Left colon (tissue), 2 donors: ENCODE measurements at regions of chr16 and their contacts with region 1.

Region 1: DNA sequence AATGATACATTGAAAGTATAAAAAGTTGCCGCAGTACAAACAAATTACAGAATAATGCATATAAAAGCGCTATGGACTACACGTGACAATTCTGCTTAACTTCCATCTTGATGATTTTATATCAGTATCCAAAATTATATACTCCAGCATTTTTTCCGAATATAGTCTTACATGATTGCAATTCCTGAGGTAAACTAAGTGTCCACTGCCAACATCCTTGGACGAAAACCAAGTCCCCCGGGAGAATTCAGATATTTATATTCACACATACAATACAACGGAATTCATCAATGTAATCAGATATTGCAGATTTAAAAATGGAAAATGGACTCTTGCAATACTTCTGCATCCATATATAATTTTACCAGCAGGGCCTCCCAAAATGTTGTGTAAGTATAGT is 8.9 kb upstream of the MYH11 start:
- DNase-seq: no peak
- ATAC-seq: no peak

Region 2: DNA sequence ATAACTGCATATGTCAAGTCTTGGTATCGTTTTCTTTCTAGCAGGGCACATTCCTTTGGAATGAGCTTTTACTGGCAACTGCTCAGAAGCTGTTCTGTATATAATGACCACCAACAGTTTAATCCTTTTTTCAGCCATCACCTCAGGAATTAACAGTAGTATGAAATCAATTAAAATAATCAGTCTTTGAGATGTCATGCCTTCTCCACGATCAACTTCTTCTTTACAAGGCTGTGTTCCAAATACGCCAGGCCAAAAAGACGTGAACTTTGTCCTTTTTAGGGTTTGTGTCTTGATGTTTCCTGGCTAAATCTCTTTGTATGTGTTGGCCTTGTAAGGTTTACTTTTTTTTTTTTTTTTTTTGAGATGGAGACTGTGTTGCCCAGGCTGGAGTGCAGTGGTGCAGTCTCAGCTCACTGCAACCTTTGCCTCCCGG is 138.6 kb after region 1 on chr16:
- intact Hi-C with region 1: no loop called
- DNase-seq: no peak
- ATAC-seq: no peak

Region 3: DNA sequence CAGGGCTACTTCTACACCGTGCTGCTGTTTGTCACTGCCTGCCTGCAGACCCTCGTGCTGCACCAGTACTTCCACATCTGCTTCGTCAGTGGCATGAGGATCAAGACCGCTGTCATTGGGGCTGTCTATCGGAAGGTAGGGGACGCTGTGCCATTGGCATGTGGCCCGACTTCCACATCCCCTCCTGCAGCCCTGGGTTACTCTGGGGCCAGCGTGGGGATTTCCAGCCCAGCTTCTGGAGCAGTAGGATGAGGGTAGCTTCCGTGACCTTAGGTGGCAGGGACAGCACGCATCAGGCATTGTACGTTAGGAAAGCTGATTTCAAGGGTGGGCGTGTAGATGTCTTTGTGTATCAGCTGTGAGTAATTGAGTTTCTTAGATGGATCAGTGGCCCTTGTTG is 180.1 kb after region 1 on chr16:
- intact Hi-C with region 1: loop called in 1 of 2 experiments (anchors 5 kb)
- DNase-seq: no peak
- ATAC-seq: no peak